ENCODE measurements at regions of chr7 and their contacts with region 1.

Region 1: DNA sequence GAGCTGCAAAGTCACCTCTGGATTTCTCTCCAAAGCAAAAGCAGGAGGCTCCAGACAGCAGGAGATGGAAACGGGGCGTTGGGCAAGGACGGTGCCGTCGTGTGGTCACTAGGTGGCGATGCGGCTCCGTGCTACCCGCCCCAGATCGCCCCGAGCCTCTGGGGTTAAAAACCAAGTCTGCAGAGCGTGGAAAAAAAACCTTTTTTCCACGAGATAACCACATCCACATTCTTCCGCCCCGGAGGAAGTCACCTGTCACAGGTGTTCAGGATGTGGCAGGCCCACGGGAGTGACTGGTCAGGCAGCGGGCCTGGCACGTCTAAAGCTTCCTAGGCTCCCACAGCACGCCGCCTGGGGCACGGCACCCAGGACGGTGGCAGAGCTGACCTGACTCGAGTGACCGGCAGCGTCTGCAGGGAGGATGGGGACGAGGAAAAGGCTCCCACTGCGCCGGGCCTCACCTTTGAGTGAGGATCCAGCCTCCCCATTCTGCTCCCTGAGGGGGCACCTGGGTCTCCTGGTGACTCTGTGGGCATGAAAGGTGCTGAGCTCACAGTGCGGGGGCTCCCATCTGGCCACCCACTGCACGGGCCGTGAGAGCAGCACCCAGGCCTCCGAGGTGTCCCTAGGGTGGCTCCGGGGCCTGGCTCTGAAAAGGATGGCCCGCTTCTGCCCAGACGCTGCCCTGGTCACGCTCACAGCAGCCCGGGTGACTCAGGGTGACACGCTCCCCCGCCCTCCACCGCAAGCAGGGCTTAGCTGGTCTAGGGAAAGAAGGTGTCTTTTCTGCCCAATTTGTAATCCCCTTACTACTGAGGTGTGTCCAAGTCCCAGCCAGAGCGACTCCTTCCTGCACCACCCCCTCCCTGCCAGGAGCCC is 71.3 kb upstream of the TNRC18 start:
- DNase-seq: peak; percentile 85
- ATAC-seq: peak; percentile 93
- H3K4me3 Mint-ChIP-seq: no peak overlapping the region
- H3K27ac Mint-ChIP-seq: peak overlapping the region; percentile 11
- H3K4me1 Mint-ChIP-seq: peaks cover 22% of the 10 kb centered on the region
- H3K27me3 Mint-ChIP-seq: no peaks in the 10 kb centered on the region

Region 2: GRCh38 chr7:5237286-5237685 is 257.6 kb before region 1 on chr7:
- CTCF ChIA-PET with region 1: interaction called, 18 read pairs
- DNase-seq: no peak
- ATAC-seq: no peak
- H3K4me3 Mint-ChIP-seq: no peak overlapping the region
- H3K27ac Mint-ChIP-seq: no peak overlapping the region
- H3K4me1 Mint-ChIP-seq: peaks cover 22% of the 10 kb centered on the region
- H3K27me3 Mint-ChIP-seq: peaks cover 24% of the 10 kb centered on the region

Region 3: DNA sequence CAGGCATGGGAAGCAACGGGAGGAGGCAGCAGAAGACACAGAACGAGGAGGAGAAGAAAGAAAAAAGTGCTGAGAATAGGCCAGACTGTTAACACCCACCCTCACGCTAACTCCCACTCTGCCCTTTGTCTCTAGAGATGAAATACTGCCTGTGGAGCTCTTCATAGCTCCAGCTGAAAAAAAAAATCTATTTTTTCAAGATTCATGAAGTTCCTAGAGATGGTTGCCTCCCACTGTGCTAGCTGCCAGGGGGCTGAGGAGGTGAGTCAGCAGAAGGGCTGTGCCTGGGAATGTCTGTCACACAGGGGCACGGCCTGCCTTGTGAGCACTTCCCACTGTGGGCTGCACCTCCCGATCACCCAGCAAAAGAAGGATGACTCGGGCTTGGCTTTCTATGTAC is 142.0 kb after region 1 on chr7:
- CTCF ChIA-PET with region 1: interaction called, 11 read pairs
- DNase-seq: no peak
- ATAC-seq: no peak
- H3K4me3 Mint-ChIP-seq: no peak overlapping the region
- H3K27ac Mint-ChIP-seq: no peak overlapping the region
- H3K4me1 Mint-ChIP-seq: peaks cover 16% of the 10 kb centered on the region
- H3K27me3 Mint-ChIP-seq: no peaks in the 10 kb centered on the region

Region 4: GRCh38 chr7:5694912-5695726 is 200.2 kb after region 1 on chr7:
- CTCF ChIA-PET with region 1: interaction called, 21 read pairs
- DNase-seq: peak; percentile 88
- ATAC-seq: peak; percentile 91
- H3K4me3 Mint-ChIP-seq: peak overlapping the region; percentile 45
- H3K27ac Mint-ChIP-seq: peak overlapping the region; percentile 72
- H3K4me1 Mint-ChIP-seq: peaks cover 61% of the 10 kb centered on the region
- H3K27me3 Mint-ChIP-seq: peaks cover 24% of the 10 kb centered on the region

Measured in activated CD8-positive, alpha-beta memory T cell treated with anti-CD3 and anti-CD28 coated beads, Interleukin-2, amount 10 ng/mL, durations not matched to agents 7 days and 5 days (primary cell).